ENCODE measurements at regions of chr1 and their contacts with region 1.

Region 1: DNA sequence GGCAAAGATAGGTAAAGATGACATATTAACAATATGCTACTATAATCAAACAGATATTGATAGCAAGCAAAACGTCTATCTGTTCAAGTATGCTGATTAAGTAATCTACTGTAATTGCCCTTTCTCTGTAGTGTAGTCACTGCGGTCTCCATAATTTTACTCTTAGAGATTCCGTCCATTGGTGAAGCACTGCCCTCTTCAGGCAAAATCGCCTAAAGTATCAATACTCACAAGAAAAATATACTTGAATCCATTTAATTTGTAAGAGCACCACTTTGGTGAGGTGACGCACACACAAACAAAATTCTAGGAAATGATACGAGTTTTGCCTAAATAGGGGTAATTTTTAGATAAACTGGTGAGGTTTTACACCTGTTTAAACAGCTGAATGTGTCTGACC is 434.6 kb upstream of the CHRM3 start:
- DNase-seq: peak; percentile 81
- ATAC-seq: peak; percentile 35
- H3K4me3 ChIP-seq: no peak overlapping the region
- H3K27ac ChIP-seq: no peak overlapping the region
- H3K4me1 ChIP-seq: peaks cover 20% of the 10 kb centered on the region
- H3K27me3 ChIP-seq: no peaks in the 10 kb centered on the region
- CTCF ChIP-seq: peak; percentile 93

Region 2: DNA sequence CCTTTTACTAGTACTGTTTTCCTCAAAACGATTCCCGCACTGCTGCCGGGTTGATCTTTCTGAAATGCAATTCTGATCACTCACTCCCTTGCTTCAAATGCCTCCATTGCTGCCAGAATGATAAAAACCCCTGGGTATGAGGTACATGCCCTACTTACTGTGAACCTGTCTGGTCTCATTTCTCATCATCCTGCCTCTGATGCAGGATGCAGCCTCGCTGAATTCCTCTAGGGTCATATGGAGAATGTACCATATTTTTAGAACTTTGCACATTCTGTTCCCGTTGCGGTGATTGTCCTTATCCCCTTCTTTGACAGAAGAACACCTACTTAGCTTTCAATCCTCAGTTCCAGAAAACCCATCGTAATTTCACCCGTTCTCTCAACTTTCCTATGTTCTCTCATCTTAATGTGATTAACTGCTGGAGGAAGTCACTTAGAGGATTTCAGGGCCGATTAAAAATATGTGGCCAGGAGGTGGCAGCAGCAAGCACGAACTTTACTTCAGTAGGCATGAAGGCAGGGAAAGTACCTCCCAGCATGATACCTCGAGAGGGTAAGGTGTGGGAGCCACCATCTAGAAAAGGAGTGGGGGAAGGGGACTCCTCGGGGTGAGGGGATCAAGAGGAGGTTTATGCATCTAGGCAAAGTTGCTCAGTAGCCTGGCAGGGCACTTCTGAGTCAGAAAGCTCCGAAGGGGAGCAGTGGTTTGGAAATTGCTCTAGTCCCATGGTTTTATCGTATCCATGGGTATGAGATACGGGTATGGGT is 699.6 kb before region 1 on chr1:
- CTCF ChIA-PET with region 1: no interaction called
- POLR2A ChIA-PET with region 1: no interaction called
- intact Hi-C with region 1: loop called (anchors 5 kb)
- DNase-seq: peak; percentile 70
- ATAC-seq: peak; percentile 86
- H3K4me3 ChIP-seq: no peak overlapping the region
- H3K27ac ChIP-seq: no peak overlapping the region
- H3K4me1 ChIP-seq: no peaks in the 10 kb centered on the region
- H3K27me3 ChIP-seq: no peaks in the 10 kb centered on the region
- CTCF ChIP-seq: peak; percentile 70

Region 3: GRCh38 chr1:238469146-238469631 is 482.6 kb before region 1 on chr1:
- CTCF ChIA-PET with region 1: no interaction called
- POLR2A ChIA-PET with region 1: no interaction called
- intact Hi-C with region 1: loop called (anchors 5 kb)
- DNase-seq: no peak
- ATAC-seq: no peak
- H3K4me3 ChIP-seq: no peak overlapping the region
- H3K27ac ChIP-seq: no peak overlapping the region
- H3K4me1 ChIP-seq: peaks cover 3% of the 10 kb centered on the region; the same call in 1 of the 2 replicates
- H3K27me3 ChIP-seq: no peaks in the 10 kb centered on the region
- CTCF ChIP-seq: no peak

Region 4: GRCh38 chr1:238999944-239000343 is 48.1 kb after region 1 on chr1:
- CTCF ChIA-PET with region 1: no interaction called
- POLR2A ChIA-PET with region 1: no interaction called
- intact Hi-C with region 1: no loop called
- DNase-seq: no peak
- ATAC-seq: no peak
- H3K4me3 ChIP-seq: no peak overlapping the region
- H3K27ac ChIP-seq: no peak overlapping the region
- H3K4me1 ChIP-seq: no peaks in the 10 kb centered on the region
- H3K27me3 ChIP-seq: no peaks in the 10 kb centered on the region
- CTCF ChIP-seq: no peak